H1 (cell line): ENCODE measurements at regions of chr1 and their contacts with region 1.

Region 1: DNA sequence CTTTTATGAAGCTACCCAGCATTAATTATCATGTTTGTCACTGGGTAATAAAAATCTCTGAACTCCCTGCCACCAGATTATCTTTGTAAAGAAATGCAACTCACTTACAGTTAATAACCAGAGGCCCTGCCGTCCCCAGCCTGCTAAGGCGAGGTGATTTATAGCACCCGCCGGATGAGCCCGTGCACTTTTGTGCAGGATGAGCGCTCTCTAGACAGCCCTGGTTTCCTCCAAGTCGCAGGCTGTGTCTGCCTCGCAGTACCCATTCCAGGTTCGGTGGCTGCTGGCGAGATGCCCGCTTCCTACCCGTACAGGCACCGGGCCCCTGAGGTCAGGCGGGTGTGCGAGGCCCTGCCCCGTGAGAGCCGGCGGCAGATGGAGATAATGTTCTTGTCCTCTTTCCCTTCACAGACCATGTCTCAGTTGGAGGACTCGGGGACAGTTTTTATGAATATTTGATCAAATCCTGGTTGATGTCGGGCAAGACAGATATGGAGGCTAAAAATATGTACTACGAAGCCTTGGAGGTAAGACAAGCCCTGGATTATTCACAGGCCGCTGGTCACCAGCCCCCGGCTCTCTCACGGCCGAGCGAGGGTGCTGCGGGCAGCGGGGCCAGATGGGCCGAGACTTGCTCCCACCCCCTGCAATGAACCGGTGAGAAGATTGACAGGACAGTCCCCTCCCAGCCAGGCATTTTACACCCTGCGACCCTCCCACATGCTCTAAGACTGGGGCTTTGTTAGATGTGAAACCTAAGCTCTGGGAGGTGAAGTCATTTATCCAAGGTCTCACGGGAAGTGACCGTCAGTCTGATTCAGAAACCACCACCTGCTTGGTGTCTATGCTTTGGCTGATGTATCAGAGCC is 28.5 kb upstream of the SELENON start:
- DNase-seq: no peak
- H3K4me3 ChIP-seq: no peak overlapping the region
- H3K27ac ChIP-seq: no peak overlapping the region
- H3K4me1 ChIP-seq: peaks cover 0 to 9% (median 3%) of the 10 kb centered on the region in 4 experiments; a peak in 4 of 7 replicates
- H3K27me3 ChIP-seq: no peaks in the 10 kb centered on the region
- CTCF ChIP-seq: no peak
- EP300 ChIP-seq: no peak
- POLR2A ChIP-seq: no peak
- RAD21 ChIP-seq: no peak

Region 2: DNA sequence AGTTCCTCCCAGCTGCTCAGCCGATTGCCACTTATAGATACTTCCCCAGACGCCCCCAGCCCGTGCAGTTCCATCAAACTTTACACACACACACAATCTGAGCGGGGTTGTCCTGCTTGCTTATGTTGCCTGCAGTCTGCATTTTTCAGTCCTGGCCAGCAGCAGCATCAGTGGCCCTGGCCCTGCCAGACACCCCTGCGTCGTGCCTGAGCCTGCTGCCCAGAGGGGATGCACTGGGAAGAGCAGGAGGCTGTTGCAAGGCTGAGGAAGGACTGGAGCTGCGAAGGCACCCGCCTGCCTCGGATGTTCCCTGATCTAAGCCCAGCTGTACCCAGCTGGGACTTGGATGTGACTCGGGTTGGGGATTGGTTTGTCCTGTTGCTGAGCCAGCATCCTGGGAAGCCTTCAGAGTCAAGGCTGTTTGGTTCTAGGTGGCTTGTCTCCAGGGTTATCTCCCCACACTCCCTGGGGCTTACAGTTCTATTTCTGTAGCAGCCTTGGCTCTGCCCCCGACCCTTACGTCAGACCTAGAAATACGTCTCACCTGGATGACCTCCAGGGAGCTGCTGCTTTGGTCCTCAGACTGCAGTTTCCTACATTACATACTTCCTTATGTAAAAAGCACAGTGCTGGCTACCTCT is 112.6 kb before region 1 on chr1:
- CTCF ChIA-PET with region 1: no interaction called
- POLR2A ChIA-PET with region 1: no interaction called
- DNase-seq: no peak
- H3K4me3 ChIP-seq: no peak overlapping the region
- H3K27ac ChIP-seq: no peak overlapping the region
- H3K4me1 ChIP-seq: peaks cover 0 to 10% (median 2%) of the 10 kb centered on the region in 4 experiments; a peak in 4 of 7 replicates
- H3K27me3 ChIP-seq: no peaks in the 10 kb centered on the region
- CTCF ChIP-seq: 0 out of 4 replicates have a peak, but pooled peaks of 1 of the 3 experiments have one; percentile 3
- EP300 ChIP-seq: no peak
- POLR2A ChIP-seq: no peak
- RAD21 ChIP-seq: no peak

Region 3: GRCh38 chr1:25743826-25744581 is 27.5 kb before region 1 on chr1:
- CTCF ChIA-PET with region 1: no interaction called
- POLR2A ChIA-PET with region 1: no interaction called
- DNase-seq: peak; percentile 47 to 63
- H3K4me3 ChIP-seq: no peak overlapping the region
- H3K27ac ChIP-seq: no peak overlapping the region
- H3K4me1 ChIP-seq: peaks cover 12 to 33% (median 17%) of the 10 kb centered on the region in 4 experiments
- H3K27me3 ChIP-seq: no peaks in the 10 kb centered on the region; a peak in 1 of 7 replicates
- CTCF ChIP-seq: peak; percentile 55 to 69 (median 65)
- EP300 ChIP-seq: no peak
- POLR2A ChIP-seq: no peak
- RAD21 ChIP-seq: peak; percentile 61 to 78

Region 4: DNA sequence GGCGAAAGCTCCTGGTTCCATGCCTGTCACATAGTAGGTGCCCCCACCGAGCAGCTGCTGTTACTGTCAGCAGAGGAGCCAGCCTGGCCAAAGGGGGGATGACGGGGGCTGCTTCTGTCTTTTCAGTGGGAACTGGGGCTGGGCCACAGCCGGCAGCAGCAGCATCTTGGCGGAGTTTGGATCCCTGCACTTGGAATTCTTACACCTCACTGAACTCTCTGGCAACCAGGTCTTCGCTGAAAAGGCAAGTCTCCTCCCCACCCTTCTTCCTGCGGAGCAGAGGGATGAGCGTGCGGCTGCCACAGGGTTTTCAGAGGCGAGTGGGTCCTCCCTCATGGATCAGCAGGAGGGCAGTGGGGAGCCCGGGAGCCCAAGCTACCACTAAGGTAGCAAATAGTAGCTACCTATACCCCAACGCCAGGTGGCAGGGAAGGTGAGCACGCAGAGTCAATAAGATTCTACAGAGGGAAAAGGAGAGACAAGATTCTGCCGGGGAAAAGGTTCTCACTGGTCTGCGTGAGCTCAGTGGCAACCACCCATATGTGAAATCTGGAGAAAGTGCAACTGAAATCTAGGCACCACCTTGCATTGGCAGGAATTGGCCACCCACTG is 12.9 kb before region 1 on chr1:
- CTCF ChIA-PET with region 1: interaction called, 13 read pairs
- POLR2A ChIA-PET with region 1: interaction called, 3 read pairs
- DNase-seq: no peak
- H3K4me3 ChIP-seq: no peak overlapping the region
- H3K27ac ChIP-seq: no peak overlapping the region
- H3K4me1 ChIP-seq: peaks cover 0 to 16% (median 7%) of the 10 kb centered on the region in 4 experiments; a peak in 5 of 7 replicates
- H3K27me3 ChIP-seq: no peaks in the 10 kb centered on the region
- CTCF ChIP-seq: peak in 1 of 3 experiments; percentile 24; a peak in 1 of 4 replicates
- EP300 ChIP-seq: no peak
- POLR2A ChIP-seq: no peak
- RAD21 ChIP-seq: no peak; a peak in 1 of 4 replicates

Region 5: GRCh38 chr1:25837262-25837875 is 65.9 kb after region 1 on chr1:
- CTCF ChIA-PET with region 1: no interaction called
- POLR2A ChIA-PET with region 1: no interaction called
- DNase-seq: no peak
- H3K4me3 ChIP-seq: no peak overlapping the region
- H3K27ac ChIP-seq: no peak overlapping the region
- H3K4me1 ChIP-seq: no peaks in the 10 kb centered on the region
- H3K27me3 ChIP-seq: no peaks in the 10 kb centered on the region
- CTCF ChIP-seq: peak in 2 of 3 experiments; percentile 43 to 47; a peak in 3 of 4 replicates
- EP300 ChIP-seq: no peak
- POLR2A ChIP-seq: no peak
- RAD21 ChIP-seq: peak; percentile 48 to 52